ENCODE measurements at regions of chr13 and their contacts with region 1.

Region 1: GRCh38 chr13:36736119-36736726 is 62.4 kb downstream of the SERTM1 start:
- DNase-seq: peak; percentile 35 to 70
- H3K4me3 ChIP-seq: no peak overlapping the region
- H3K27ac ChIP-seq: no peak overlapping the region
- H3K4me1 ChIP-seq: no peaks in the 10 kb centered on the region
- H3K27me3 ChIP-seq: no peaks in the 10 kb centered on the region
- CTCF ChIP-seq: peak; percentile 64 to 74 (median 68)
- POLR2A ChIP-seq: no peak

Region 2: DNA sequence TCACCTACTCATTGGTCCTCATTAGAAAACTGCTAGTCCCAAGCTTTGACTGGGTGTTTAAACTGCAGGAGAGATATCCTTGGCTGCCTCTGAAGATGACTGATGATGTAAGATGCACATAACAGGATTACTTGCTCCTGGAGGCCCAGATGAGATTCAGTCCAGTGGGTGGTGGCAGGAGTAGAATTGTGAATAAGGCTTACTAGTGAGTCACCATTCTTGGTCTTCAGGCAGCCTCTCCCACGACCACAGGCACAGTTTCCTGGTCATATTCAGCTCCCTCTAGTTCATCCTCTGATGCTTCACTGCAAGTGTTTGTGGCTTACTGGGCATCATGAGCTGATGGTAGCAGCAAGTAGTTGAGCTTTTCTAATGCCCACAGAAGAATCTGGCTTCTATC is 50.3 kb before region 1 on chr13:
- intact Hi-C with region 1: loop called (anchors 5 kb)
- DNase-seq: peak in 1 of 2 donors; percentile 27
- H3K4me3 ChIP-seq: no peak overlapping the region
- H3K27ac ChIP-seq: no peak overlapping the region
- H3K4me1 ChIP-seq: no peaks in the 10 kb centered on the region
- H3K27me3 ChIP-seq: no peaks in the 10 kb centered on the region
- CTCF ChIP-seq: no peak
- POLR2A ChIP-seq: no peak

Measured in uterus (tissue), 4 donors.